ENCODE measurements at regions of chr4 and their contacts with region 1.

Region 1: DNA sequence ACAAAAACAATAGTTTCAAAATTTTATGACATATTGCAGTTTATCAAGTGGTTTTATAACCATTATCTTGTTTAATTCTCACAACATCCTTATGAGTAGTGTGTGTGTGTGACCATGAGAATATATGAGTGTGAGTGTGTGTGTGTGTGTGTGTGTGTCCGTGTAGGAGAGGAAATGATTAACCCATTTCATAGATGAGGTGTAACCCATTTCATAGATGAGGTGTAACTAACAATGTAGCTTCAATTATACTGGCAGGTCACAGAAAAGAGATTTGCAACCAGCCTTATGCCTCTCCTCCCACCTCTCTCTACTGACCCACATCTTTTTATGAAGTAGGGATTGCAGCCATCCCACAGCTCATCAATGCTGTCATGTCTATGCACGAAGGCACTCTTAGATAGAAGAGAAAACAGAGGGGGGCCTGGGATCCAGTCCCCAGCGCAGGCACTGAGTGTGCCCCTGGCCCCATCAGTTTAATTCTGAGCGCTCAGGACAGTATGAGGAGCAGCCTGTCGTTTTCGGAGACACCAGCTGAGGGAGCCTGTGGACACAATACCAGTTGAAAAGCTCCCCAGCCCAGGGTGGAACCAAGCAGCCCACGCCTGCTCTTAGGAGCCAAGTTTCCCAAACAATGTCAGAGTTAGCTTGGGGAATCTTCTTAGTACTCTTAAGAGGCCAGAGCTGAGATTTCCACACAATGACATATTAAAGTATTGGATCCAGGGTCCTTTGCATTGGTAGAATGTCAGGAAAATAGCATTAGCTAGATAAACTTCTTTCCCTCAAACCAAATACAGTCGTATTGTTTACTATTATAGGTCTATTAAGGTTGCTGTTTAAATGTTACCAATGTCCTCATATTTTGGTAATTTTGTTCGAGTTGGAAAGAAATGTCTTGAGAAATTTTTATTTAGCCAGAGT is 88.6 kb downstream of the PALLD start:
- DNase-seq: peak; percentile 26 to 90
- H3K4me3 ChIP-seq: no peak overlapping the region
- H3K27ac ChIP-seq: no peak overlapping the region
- H3K4me1 ChIP-seq: peaks cover 3 to 24% of the 10 kb centered on the region in 2 donors
- H3K27me3 ChIP-seq: no peaks in the 10 kb centered on the region
- CTCF ChIP-seq: peak; percentile 73 to 85 (median 80)

Region 2: GRCh38 chr4:168092176-168092712 is 493.2 kb before region 1 on chr4 and contains the start of gene ANXA10:
- intact Hi-C with region 1: no loop called
- DNase-seq: no peak
- H3K4me3 ChIP-seq: no peak within 1 kb of the TSS
- H3K27ac ChIP-seq: no peak within 1 kb of the TSS
- H3K4me1 ChIP-seq: no peaks in the 10 kb centered on the region
- H3K27me3 ChIP-seq: no peaks in the 10 kb centered on the region
- CTCF ChIP-seq: no peak
- total RNA-seq, gene ANXA10: not detected

Region 3: GRCh38 chr4:168612450-168613139 is 27.2 kb after region 1 on chr4:
- intact Hi-C with region 1: loop called (anchors 2 kb)
- DNase-seq: no peak
- H3K4me3 ChIP-seq: no peak overlapping the region
- H3K27ac ChIP-seq: no peak overlapping the region
- H3K4me1 ChIP-seq: peaks cover 0 to 5% of the 10 kb centered on the region in 2 donors
- H3K27me3 ChIP-seq: no peaks in the 10 kb centered on the region
- CTCF ChIP-seq: no peak

Region 4: DNA sequence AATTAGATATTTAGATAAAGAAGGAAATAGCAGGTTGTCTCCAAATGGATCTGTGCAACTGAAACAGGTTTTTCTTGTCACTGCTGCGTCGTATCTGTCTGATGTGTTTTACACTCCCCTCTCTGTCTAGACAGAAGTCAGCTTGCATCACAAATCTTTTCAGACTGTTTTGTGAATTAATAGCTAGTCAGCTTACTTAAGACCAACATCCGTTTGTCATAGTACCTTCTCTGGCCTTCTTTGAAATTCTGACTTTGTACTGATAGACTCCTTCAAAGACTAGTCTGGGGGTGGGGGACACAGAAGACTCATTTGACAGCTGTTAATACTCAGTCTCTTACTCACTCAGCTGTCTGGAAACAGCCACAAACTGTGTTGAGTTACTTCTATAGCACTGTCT is 109.2 kb after region 1 on chr4:
- intact Hi-C with region 1: loop called (anchors 5 kb)
- DNase-seq: no peak
- H3K4me3 ChIP-seq: no peak overlapping the region
- H3K27ac ChIP-seq: no peak overlapping the region
- H3K4me1 ChIP-seq: peaks cover 0 to 3% of the 10 kb centered on the region in 2 donors
- H3K27me3 ChIP-seq: no peaks in the 10 kb centered on the region
- CTCF ChIP-seq: no peak

Region 5: GRCh38 chr4:168815379-168816345 is 230.2 kb after region 1 on chr4:
- intact Hi-C with region 1: loop called (anchors 5 kb)
- DNase-seq: no peak
- H3K4me3 ChIP-seq: peak overlapping the region in 1 of 2 donors; percentile 43
- H3K27ac ChIP-seq: peak overlapping the region; percentile 78 to 84
- H3K4me1 ChIP-seq: peaks cover 5 to 33% of the 10 kb centered on the region in 2 donors
- H3K27me3 ChIP-seq: no peaks in the 10 kb centered on the region
- CTCF ChIP-seq: no peak

Region 6: DNA sequence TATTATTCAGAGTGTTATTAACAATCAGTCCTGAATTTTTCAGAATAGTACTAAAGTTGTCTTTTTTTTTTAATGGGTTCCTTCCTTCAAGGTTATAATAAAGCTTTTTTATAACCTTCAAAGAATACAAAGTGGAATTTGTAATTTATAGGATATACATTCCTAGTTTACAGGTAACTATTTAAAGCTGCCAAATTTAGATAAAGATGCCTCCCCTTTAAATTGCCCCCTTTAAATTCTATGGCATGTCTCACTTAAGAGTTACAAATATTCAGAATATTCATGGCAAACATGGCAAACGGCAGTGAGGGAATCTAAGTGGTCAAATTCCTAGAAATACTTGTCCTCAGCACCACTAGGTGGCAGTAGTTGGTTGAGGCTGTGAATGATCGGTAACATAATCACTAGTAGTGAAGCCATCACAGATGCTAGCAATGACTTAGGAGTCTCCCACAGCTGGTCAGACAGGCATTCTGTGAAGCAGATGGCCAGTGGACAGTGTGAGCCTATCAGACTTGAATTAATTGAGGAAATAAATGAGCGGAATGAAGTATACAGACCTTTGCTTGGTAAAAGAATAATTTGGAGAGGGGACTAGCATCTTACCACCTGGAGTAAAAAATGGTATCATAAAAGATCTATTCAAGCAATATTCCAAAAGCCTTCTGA is 338.2 kb after region 1 on chr4:
- intact Hi-C with region 1: loop called (anchors 5 kb)
- DNase-seq: no peak
- H3K4me3 ChIP-seq: no peak overlapping the region
- H3K27ac ChIP-seq: no peak overlapping the region
- H3K4me1 ChIP-seq: no peaks in the 10 kb centered on the region
- H3K27me3 ChIP-seq: no peaks in the 10 kb centered on the region
- CTCF ChIP-seq: peak; percentile 50 to 69 (median 61)